ENCODE measurements at regions of chr21 and their contacts with region 1.

Region 1: DNA sequence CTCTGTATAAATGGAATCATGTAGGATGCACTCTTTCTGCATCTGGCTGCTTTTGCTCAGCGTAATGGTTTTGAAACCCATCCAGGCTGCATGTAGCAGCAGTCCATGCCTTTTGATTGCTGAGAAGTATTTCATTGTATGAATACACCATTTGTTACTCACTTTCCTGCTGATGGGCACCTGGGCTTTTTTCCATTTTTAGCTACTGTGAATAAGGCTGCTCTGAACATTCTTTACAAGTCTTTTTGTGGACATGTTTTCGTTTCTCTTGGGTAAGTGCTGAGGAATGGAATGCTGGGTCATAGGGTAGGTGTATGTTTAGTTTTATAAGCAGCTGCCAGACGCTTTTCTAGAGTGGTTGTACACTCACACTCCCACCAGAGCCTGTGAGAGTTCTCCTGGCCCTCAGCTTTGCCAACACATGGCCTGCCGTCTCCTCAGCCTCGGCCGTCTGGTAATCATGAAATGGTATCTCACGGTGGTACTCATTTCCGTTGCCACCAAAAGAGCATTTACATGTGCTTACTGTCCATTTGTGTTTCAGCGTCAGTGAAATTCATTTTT is 22.7 kb downstream of the SLX9 start:
- DNase-seq: no peak
- H3K4me3 ChIP-seq: no peak overlapping the region
- H3K27ac ChIP-seq: no peak overlapping the region
- H3K4me1 ChIP-seq: no peaks in the 10 kb centered on the region
- H3K27me3 ChIP-seq: no peaks in the 10 kb centered on the region
- CTCF ChIP-seq: no peak
- POLR2A ChIP-seq: no peak

Region 2: GRCh38 chr21:45033791-45034555 is 71.5 kb after region 1 on chr21:
- intact Hi-C with region 1: loop called (anchors 5 kb)
- DNase-seq: no peak
- H3K4me3 ChIP-seq: no peak overlapping the region
- H3K27ac ChIP-seq: peak overlapping the region in 1 of 2 donors; percentile 63
- H3K4me1 ChIP-seq: no peaks in the 10 kb centered on the region
- H3K27me3 ChIP-seq: no peaks in the 10 kb centered on the region
- CTCF ChIP-seq: no peak
- POLR2A ChIP-seq: no peak

Region 3: DNA sequence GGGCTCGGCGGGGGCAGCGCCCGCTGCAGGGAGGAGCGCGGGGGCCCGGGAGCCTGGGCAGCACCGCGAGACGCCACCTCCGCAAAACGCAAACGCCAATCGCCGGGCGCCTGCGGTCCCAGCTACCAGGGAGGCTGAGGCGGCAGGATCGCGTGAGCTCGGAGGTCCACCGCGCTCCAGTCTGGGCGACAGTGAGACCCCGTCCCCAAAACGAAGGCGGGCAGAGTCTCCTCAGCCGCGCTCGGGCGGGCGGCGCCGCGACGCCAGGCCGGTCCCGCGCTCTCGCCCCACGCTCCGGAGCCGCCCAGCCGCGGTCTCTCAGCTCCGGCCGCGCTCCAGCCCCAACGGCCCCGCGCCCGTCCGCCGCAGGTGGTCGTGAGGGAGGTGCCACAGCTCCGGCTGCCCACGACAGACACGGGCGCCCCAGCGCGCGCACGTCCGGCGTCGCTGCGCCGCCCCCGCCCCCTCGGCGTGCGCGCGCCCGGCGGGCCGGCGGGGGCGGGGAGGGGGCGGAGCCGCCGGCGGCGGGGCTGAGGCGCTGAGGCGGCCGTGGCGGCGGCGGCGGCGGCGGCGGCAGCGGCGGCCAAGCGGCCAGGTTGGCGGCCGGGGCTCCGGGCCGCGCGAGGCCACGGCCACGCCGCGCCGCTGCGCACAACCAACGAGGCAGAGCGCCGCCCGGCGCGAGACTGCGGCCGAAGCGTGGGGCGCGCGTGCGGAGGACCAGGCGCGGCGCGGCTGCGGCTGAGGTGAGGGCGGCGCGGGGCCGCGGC is 111.7 kb after region 1 on chr21 and contains the start of gene ADARB1:
- intact Hi-C with region 1: no loop called
- DNase-seq: peak; percentile 44
- H3K4me3 ChIP-seq: peak within 1 kb of the TSS; percentile 88 to 99
- H3K27ac ChIP-seq: peak within 1 kb of the TSS; percentile 89 to 96
- H3K4me1 ChIP-seq: no peaks in the 10 kb centered on the region
- H3K27me3 ChIP-seq: no peaks in the 10 kb centered on the region
- CTCF ChIP-seq: no peak
- POLR2A ChIP-seq: peak; percentile 27
- total RNA-seq, gene ADARB1: 21.0 to 30.9 TPM

Region 4: DNA sequence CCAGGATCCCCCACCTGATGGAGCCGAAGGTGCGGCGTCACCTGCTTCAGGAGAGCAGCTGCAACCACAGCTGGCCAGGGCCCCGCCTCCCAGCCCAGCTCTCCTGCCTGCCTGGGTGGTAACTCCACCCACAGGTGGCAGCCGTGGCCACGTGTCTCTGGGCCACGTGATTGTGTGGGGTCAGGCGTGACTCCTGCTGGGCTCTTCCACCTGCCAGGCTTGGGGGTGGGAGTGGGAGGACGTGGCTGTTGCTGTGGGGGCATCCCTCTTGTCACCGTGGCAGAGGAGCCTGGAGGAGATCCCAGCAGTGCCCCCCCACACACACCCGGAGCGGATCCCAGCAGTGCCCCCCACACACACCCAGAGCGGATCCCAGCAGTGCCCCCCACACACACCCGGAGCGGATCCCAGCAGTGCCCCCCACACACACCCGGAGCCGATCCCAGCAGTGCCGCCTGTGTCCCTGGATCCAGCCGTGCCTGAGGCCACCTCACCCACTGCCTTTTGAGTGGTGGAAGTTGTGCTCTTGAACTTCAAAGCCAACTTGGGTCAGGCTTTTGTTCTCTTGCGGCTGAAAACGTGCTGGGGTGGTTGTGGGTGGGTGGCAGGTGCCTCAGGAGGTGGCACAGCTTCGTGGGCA is 293.0 kb after region 1 on chr21:
- intact Hi-C with region 1: no loop called
- DNase-seq: no peak
- H3K4me3 ChIP-seq: no peak overlapping the region
- H3K27ac ChIP-seq: no peak overlapping the region
- H3K4me1 ChIP-seq: no peaks in the 10 kb centered on the region
- H3K27me3 ChIP-seq: no peaks in the 10 kb centered on the region
- CTCF ChIP-seq: no peak
- POLR2A ChIP-seq: no peak

Measured in prostate gland (tissue), 2 donors.